ENCODE measurements at regions of chr2 and their contacts with region 1.

Region 1: DNA sequence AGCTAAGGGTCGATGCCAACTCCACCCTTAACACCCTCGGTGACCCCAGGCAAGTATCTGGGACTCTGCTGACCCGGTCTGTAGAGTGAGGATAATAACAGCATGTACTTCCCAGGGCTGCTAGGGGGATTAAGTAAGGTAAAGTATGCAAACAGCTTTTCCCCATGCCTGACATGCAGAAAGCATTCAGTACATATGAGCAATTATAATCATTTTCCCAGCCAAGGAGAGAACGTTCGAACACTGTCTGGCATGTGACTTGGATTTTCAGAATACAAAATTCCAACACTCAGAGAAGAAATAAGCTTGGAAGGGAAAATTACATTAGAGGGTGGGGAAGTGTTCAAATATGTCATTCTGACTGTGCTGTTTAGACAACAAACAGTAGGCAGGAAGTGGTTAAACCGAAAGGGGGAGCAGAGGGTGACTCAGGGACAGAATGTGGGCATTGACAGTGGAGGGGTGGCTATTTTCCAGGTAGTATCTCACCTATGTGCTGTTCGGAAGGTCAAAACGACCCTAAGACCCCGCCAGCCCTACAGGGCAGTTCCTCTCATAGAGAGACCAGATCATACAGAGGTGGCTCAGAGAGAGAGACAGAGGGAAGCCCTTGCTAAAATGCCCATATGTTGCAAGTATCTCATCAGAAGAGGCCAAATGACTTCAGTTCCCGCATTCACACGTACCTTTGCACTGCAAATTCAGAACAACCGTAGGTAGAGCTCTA is 14.9 kb downstream of the ASPRV1 start:
- DNase-seq: peak; percentile 45 to 87
- H3K4me3 ChIP-seq: peak overlapping the region; percentile 16; the same call in 1 of the 2 replicates
- H3K27ac ChIP-seq: peak overlapping the region; percentile 98
- H3K4me1 ChIP-seq: peaks cover 70% of the 10 kb centered on the region
- H3K27me3 ChIP-seq: no peaks in the 10 kb centered on the region
- CTCF ChIP-seq: peak; percentile 22; the same call in 1 of the 2 replicates

Region 2: DNA sequence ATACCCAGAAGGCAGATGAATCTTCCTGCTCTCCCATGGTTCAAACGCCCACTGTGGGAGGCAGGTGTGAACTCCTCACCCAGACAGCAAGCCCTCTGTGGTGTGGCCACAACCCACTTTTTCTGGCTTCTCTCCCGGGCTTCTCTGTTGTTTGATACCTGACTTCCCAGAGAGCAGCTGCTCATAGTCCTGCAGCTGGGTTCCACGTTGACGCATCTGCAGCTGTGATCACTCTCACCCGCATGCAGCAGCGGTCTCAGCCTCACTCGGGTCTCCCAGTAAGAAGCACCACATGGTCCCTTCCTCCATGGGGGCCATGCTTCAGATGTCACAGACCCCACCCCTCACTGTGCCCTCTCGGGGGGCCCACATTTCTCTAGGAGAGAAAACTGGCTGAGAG is 11.5 kb after region 1 on chr2:
- CTCF ChIA-PET with region 1: no interaction called
- POLR2A ChIA-PET with region 1: no interaction called
- intact Hi-C with region 1: no loop called
- DNase-seq: no peak
- H3K4me3 ChIP-seq: no peak overlapping the region
- H3K27ac ChIP-seq: no peak overlapping the region
- H3K4me1 ChIP-seq: no peaks in the 10 kb centered on the region
- H3K27me3 ChIP-seq: no peaks in the 10 kb centered on the region
- CTCF ChIP-seq: no peak

Region 3: DNA sequence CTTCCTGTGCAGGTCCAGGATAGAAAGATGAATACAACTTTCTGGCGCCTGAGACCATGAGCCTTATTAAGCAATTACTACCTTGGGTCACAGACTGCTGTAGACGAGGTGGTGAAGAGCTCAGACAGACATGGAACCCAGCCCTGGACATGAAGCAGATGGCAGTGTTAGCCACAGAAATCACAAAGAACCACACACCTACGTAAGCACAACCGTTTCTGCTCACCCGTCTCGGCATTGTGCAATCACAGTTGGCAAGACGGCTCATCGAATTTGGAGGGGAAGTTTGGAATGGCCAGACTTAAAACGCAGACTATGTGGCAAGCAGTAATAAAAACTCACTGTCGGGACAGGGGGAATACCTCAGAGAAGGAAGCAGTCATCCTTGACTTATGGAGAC is 39.2 kb after region 1 on chr2:
- CTCF ChIA-PET with region 1: no interaction called
- POLR2A ChIA-PET with region 1: no interaction called
- intact Hi-C with region 1: loop called (anchors 5 kb)
- DNase-seq: no peak
- H3K4me3 ChIP-seq: no peak overlapping the region
- H3K27ac ChIP-seq: no peak overlapping the region
- H3K4me1 ChIP-seq: peaks cover 31% of the 10 kb centered on the region
- H3K27me3 ChIP-seq: no peaks in the 10 kb centered on the region
- CTCF ChIP-seq: no peak